ENCODE measurements at regions of chr17 and their contacts with region 1.

Region 1: GRCh38 chr17:56653877-56654276 is 60.4 kb downstream of the NOG start:
- DNase-seq: peak; percentile 15 to 88 (median 83)
- ATAC-seq: peak; percentile 99
- H3K4me3 ChIP-seq: no peak overlapping the region
- H3K4me3 Mint-ChIP-seq: peak overlapping the region in 4 of 10 donors; percentile 10 to 55 (median 34)
- H3K27ac ChIP-seq: peak overlapping the region; percentile 59
- H3K27ac Mint-ChIP-seq: peak overlapping the region in 8 of 9 donors; percentile 44 to 93 (median 88)
- H3K4me1 ChIP-seq: peaks cover 0 to 6% of the 10 kb centered on the region in 2 donors
- H3K4me1 Mint-ChIP-seq: peaks cover 5 to 21% (median 9%) of the 10 kb centered on the region in 7 donors
- H3K27me3 ChIP-seq: no peaks in the 10 kb centered on the region
- H3K27me3 Mint-ChIP-seq: peaks cover 0 to 18% (median 0%) of the 10 kb centered on the region in 5 donors

Region 2: GRCh38 chr17:56499799-56500388 is 154.0 kb before region 1 on chr17:
- CTCF ChIA-PET with region 1: interaction called, 6 read pairs
- POLR2A ChIA-PET with region 1: no interaction called
- intact Hi-C with region 1: loop called in 1 of 2 experiments (anchors 1 kb)
- DNase-seq: peak in 7 of 9 donors; percentile 7 to 45 (median 32)
- ATAC-seq: no peak
- H3K4me3 ChIP-seq: no peak overlapping the region
- H3K4me3 Mint-ChIP-seq: no peak overlapping the region
- H3K27ac ChIP-seq: no peak overlapping the region
- H3K27ac Mint-ChIP-seq: no peak overlapping the region
- H3K4me1 ChIP-seq: no peaks in the 10 kb centered on the region
- H3K4me1 Mint-ChIP-seq: no peaks in the 10 kb centered on the region
- H3K27me3 ChIP-seq: no peaks in the 10 kb centered on the region
- H3K27me3 Mint-ChIP-seq: peaks cover 0 to 6% (median 0%) of the 10 kb centered on the region in 5 donors

Region 3: DNA sequence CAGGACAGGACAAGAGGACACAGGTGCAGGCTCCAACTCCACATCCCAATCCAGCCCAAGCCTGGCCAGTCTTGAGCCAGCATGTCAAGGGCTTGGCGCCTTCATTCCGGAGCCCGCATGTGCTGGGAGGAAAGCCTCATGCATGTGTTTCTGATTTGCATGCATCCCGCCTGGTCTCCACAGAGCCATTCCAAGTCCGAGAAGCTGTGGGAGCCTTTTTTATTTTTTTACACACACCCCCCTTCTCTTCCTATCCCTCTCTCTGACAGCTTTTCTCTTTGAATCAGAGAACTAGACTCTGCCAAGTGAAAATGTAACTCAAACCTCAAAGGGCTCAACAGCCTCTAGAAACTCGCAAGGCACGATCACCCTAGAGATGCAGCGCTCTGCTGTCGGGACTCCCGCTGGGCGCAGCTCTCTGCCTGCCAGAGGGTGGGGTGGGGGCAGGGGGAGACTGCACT is 15.3 kb before region 1 on chr17:
- CTCF ChIA-PET with region 1: interaction called, 3 read pairs
- POLR2A ChIA-PET with region 1: interaction called, 9 read pairs
- intact Hi-C with region 1: loop called in 1 of 2 experiments (anchors 1 kb)
- DNase-seq: no peak
- ATAC-seq: no peak
- H3K4me3 ChIP-seq: no peak overlapping the region
- H3K4me3 Mint-ChIP-seq: no peak overlapping the region
- H3K27ac ChIP-seq: no peak overlapping the region
- H3K27ac Mint-ChIP-seq: no peak overlapping the region
- H3K4me1 ChIP-seq: no peaks in the 10 kb centered on the region
- H3K4me1 Mint-ChIP-seq: peaks cover 0 to 30% (median 13%) of the 10 kb centered on the region in 7 donors
- H3K27me3 ChIP-seq: no peaks in the 10 kb centered on the region
- H3K27me3 Mint-ChIP-seq: peaks cover 0 to 15% (median 0%) of the 10 kb centered on the region in 5 donors

Region 4: GRCh38 chr17:56679115-56679766 is 25.4 kb after region 1 on chr17:
- CTCF ChIA-PET with region 1: interaction called, 6 read pairs
- POLR2A ChIA-PET with region 1: interaction called, 3 read pairs
- intact Hi-C with region 1: loop called in 1 of 2 experiments (anchors 1 kb)
- DNase-seq: peak in 5 of 9 donors; percentile 30 to 47 (median 40)
- ATAC-seq: peak; percentile 65
- H3K4me3 ChIP-seq: peak overlapping the region; percentile 40
- H3K4me3 Mint-ChIP-seq: peak overlapping the region in 9 of 10 donors; percentile 77 to 91 (median 86)
- H3K27ac ChIP-seq: no peak overlapping the region
- H3K27ac Mint-ChIP-seq: peak overlapping the region in 2 of 9 donors; percentile 9 to 10
- H3K4me1 ChIP-seq: peaks cover 19 to 20% of the 10 kb centered on the region in 2 donors
- H3K4me1 Mint-ChIP-seq: peaks cover 7 to 23% (median 17%) of the 10 kb centered on the region in 7 donors
- H3K27me3 ChIP-seq: no peaks in the 10 kb centered on the region
- H3K27me3 Mint-ChIP-seq: peaks cover 12 to 52% (median 31%) of the 10 kb centered on the region in 5 donors